Activated CD4-positive, alpha-beta T cell treated with anti-CD3 and anti-CD28 coated beads, Interleukin-2, amount 10 ng/mL, durations not matched to agents 24 days and 14 days (primary cell): ENCODE measurements at regions of chr2 and their contacts with region 1.

Region 1: DNA sequence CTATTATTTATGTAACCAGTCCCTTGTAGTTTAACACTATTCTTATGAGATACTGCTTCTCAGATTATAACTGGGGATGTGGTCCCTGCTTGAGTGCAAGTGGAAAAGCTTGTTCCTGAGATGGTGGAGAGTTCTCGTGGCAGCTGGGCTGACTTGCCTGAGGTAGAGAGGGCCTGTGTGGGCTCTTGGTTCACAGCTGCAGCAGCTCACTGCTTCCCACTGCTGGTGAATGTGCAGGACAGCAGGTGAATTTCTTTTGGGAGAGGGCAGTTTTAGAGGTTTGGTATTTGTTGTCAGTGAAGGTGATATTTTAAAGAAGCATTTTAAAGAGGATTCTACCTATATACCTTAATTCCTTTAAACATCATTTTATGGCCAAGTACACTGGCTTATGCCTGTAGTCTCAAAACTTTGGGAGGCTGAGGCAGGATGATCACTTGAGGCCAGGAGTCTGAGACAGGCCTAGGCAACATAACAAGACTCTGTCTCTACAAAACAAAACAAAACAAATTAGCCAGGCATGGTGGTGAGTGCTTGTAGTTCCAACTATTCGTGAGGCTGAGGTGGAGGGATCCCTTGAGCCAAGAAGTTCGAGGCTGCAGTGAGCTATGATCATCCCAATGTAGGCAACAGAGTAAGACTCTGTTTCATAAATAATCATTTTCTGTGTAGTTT is 94.8 kb downstream of the MTA3 start:
- DNase-seq: peak; percentile 89
- H3K4me3 Mint-ChIP-seq: no peak overlapping the region
- H3K27ac Mint-ChIP-seq: no peak overlapping the region
- H3K4me1 Mint-ChIP-seq: peaks cover 7% of the 10 kb centered on the region
- H3K27me3 Mint-ChIP-seq: no peaks in the 10 kb centered on the region

Region 2: DNA sequence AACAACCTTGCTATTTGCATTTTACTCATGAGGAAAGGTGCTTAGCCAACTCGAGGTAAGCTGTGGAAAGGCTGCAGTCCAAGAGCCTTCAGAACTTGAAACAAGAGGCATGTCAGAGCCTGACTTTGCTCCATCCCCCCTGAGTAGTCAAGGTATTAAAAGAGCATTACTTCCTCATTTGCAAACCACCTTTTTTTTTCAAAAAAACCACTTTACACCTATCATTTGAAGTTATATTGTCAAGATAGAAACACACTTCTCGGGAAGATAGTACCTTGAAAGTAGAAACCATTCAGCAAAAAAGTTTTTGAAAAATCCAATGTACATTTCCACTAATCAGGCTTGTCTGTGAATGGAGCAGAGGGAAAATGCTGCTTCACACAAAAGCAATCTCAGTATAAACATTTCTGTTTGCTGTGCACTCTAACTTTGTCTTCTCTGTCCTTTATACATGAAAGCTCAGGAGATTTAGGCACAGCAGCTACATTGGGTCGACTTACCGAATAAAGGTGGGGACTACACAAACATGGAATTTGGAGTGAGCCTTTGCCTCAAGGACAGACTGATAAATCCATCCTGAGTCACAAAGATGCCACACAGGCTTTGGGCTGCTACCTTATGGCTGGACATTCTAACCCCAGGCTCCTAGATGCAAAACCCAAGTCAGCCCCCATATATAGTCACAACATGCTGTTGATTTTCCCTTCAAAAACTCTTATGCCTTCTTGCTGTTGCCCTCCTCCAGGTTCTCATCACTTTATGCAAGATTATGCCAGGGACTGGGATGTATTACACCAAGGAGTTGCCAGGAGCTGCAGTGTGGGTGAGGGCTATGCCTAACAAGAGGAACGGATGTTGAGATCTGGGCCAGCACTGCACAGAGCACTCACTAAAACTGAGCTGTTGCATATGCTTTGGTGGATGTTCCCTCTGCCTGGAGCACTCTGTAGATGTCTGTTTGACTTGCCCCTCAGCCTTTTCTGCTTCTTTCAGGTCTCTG is 535.5 kb before region 1 on chr2:
- intact Hi-C with region 1: no loop called
- DNase-seq: peak; percentile 75
- H3K4me3 Mint-ChIP-seq: peak overlapping the region; percentile 66
- H3K27ac Mint-ChIP-seq: peak overlapping the region; percentile 30
- H3K4me1 Mint-ChIP-seq: peaks cover 85% of the 10 kb centered on the region
- H3K27me3 Mint-ChIP-seq: no peaks in the 10 kb centered on the region

Region 3: GRCh38 chr2:42328148-42328833 is 335.0 kb before region 1 on chr2:
- intact Hi-C with region 1: no loop called
- DNase-seq: no peak
- H3K4me3 Mint-ChIP-seq: no peak overlapping the region
- H3K27ac Mint-ChIP-seq: peak overlapping the region; percentile 20
- H3K4me1 Mint-ChIP-seq: peaks cover 14% of the 10 kb centered on the region
- H3K27me3 Mint-ChIP-seq: no peaks in the 10 kb centered on the region

Region 4: GRCh38 chr2:42494355-42495233 is 168.6 kb before region 1 on chr2:
- intact Hi-C with region 1: loop called (anchors 1 kb)
- DNase-seq: peak; percentile 92
- H3K4me3 Mint-ChIP-seq: peak overlapping the region; percentile 86
- H3K27ac Mint-ChIP-seq: peak overlapping the region; percentile 76
- H3K4me1 Mint-ChIP-seq: peaks cover 10% of the 10 kb centered on the region
- H3K27me3 Mint-ChIP-seq: peaks cover 37% of the 10 kb centered on the region

Region 5: GRCh38 chr2:42513257-42513918 is 149.9 kb before region 1 on chr2:
- intact Hi-C with region 1: loop called (anchors 1 kb)
- DNase-seq: peak; percentile 75
- H3K4me3 Mint-ChIP-seq: no peak overlapping the region
- H3K27ac Mint-ChIP-seq: no peak overlapping the region
- H3K4me1 Mint-ChIP-seq: peaks cover 10% of the 10 kb centered on the region
- H3K27me3 Mint-ChIP-seq: no peaks in the 10 kb centered on the region

Region 6: DNA sequence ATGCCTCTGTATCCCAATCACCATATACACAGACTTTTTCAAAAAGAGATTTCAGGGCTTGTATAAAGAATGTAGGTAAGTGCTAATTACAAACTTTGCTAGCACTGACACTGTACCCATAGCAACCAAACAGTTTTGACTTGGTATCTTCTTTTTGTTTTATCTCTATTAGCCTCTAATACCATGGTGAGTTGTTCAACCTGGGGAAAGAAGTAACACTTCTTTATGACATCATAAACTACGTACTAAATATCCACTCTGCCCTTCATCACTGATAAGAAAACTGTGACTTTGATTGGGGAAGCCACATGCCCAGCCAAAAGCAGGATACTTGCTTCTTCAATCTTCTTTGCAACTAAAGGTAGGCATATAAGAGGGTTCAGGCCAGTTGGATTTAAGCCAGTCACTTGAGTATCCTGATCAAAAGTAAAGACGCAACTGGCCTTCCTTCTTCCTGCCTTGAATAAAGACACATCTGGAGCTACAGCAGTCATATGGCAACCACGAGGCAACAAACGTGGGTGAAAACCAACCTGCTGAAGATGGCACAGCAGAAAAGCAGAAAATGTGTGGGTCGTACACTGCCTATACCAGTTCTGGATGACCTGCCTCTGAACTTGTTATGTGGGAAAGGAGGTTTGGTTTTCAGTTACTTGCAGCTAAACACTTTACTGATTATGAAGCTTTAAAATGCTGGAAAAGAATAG is 916.2 kb after region 1 on chr2:
- intact Hi-C with region 1: no loop called
- DNase-seq: peak; percentile 50
- H3K4me3 Mint-ChIP-seq: no peak overlapping the region
- H3K27ac Mint-ChIP-seq: no peak overlapping the region
- H3K4me1 Mint-ChIP-seq: peaks cover 10% of the 10 kb centered on the region
- H3K27me3 Mint-ChIP-seq: no peaks in the 10 kb centered on the region

Region 7: GRCh38 chr2:43958397-43959275 is 1295.4 kb after region 1 on chr2:
- intact Hi-C with region 1: no loop called
- DNase-seq: no peak
- H3K4me3 Mint-ChIP-seq: no peak overlapping the region
- H3K27ac Mint-ChIP-seq: no peak overlapping the region
- H3K4me1 Mint-ChIP-seq: peaks cover 2% of the 10 kb centered on the region
- H3K27me3 Mint-ChIP-seq: no peaks in the 10 kb centered on the region